ENCODE measurements at regions of chr4 and their contacts with region 1.

Region 1: GRCh38 chr4:65983061-65983460 is 312.8 kb upstream of the EPHA5 start:
- DNase-seq: no peak
- H3K4me3 ChIP-seq: no peak overlapping the region
- H3K27ac ChIP-seq: no peak overlapping the region
- H3K4me1 ChIP-seq: no peaks in the 10 kb centered on the region
- H3K27me3 ChIP-seq: no peaks in the 10 kb centered on the region

Region 2: DNA sequence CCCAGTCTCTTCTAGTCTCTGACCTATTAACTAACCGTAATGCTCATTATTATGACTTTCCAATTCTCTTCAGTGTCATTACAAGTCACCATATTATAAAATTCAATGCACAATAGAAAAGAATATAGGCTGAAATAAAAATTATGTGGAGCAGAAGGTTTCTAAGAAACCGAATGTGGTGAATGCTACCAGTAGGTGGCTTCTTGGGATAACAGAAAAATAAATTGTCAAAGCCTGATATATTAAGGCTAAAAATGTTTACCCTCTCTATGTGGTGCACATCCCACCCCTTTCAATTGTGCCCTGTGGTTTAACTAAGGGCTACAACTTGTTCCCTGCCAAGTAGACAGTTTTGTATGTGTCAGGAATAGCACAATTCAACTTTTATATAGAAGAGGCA is 949.2 kb before region 1 on chr4:
- in situ Hi-C with region 1: no loop called
- DNase-seq: peak; percentile 3
- H3K4me3 ChIP-seq: no peak overlapping the region
- H3K27ac ChIP-seq: no peak overlapping the region
- H3K4me1 ChIP-seq: no peaks in the 10 kb centered on the region
- H3K27me3 ChIP-seq: no peaks in the 10 kb centered on the region

Region 3: DNA sequence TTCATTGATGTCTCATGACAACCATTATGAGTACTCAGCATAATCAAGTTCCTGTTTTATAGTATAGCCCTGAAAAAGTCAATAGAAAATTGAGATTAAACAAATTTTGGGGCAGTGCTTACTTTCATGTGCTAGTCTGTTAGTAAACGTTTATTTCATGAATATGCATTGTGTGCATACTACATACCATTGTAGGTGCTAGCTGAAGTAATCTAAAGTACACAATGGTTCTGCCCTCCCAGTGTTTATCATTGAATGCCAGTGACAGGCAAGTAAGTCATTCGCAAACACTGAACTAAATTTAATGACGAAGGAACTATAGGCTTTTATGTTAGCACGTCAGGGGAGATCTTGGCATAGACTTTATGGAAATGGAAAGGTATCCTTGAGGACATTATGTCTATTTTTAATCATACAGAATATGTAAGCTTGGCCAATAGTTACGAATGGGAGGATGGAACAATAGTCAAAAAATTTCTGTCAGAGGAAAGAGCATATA is 114.2 kb after region 1 on chr4:
- in situ Hi-C with region 1: loop called (anchors 25 kb)
- DNase-seq: no peak
- H3K4me3 ChIP-seq: no peak overlapping the region
- H3K27ac ChIP-seq: no peak overlapping the region
- H3K4me1 ChIP-seq: no peaks in the 10 kb centered on the region
- H3K27me3 ChIP-seq: no peaks in the 10 kb centered on the region

Region 4: GRCh38 chr4:66465111-66465510 is 482.1 kb after region 1 on chr4:
- in situ Hi-C with region 1: no loop called
- DNase-seq: no peak
- H3K4me3 ChIP-seq: no peak overlapping the region
- H3K27ac ChIP-seq: no peak overlapping the region
- H3K4me1 ChIP-seq: no peaks in the 10 kb centered on the region
- H3K27me3 ChIP-seq: no peaks in the 10 kb centered on the region